Endothelial cell of umbilical vein (primary cell): ENCODE measurements at regions of chr15 and their contacts with region 1.

Region 1: GRCh38 chr15:78750566-78750965 is 60.7 kb downstream of the ADAMTS7 start:
- DNase-seq: no peak
- H3K4me3 ChIP-seq: peak overlapping the region in 1 of 3 experiments; percentile 10
- H3K27ac ChIP-seq: no peak overlapping the region
- H3K4me1 ChIP-seq: no peaks in the 10 kb centered on the region
- H3K27me3 ChIP-seq: no peaks in the 10 kb centered on the region
- CTCF ChIP-seq: no peak
- POLR2A ChIP-seq: no peak

Region 2: DNA sequence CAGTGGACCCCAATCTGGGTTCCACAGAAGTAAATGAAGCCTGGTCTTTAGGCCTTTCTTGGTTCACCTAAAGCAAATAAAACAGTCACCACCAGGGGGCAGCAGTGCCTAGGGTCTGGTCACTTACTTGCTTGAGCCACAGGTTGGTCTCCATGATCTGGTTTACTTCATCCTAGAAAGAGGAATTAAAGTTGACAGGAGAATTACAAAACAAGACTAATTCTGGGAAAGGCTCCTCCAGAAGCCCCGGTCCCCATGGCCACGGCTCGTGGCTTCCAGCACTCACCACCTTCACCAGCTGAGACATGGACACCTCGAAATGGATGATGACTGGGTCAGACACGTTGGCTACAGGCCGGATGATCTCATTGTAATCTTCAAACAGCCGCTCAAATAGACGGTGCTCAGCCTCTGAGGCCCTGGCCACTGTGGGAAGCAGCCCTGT is 132.1 kb before region 1 on chr15:
- CTCF ChIA-PET with region 1: interaction called, 23 read pairs
- POLR2A ChIA-PET with region 1: no interaction called
- dilution Hi-C with region 1: no loop called
- intact Hi-C with region 1: loop called (anchors 1 kb)
- DNase-seq: peak; percentile 73
- H3K4me3 ChIP-seq: no peak overlapping the region
- H3K27ac ChIP-seq: no peak overlapping the region
- H3K4me1 ChIP-seq: no peaks in the 10 kb centered on the region
- H3K27me3 ChIP-seq: peaks cover 30 to 49% of the 10 kb centered on the region in 2 experiments
- CTCF ChIP-seq: peak; percentile 73 to 76
- POLR2A ChIP-seq: no peak

Region 3: GRCh38 chr15:78709263-78709882 is 41.2 kb before region 1 on chr15:
- CTCF ChIA-PET with region 1: interaction called, 10 read pairs
- POLR2A ChIA-PET with region 1: no interaction called
- dilution Hi-C with region 1: no loop called
- intact Hi-C with region 1: loop called (anchors 1 kb)
- DNase-seq: peak; percentile 42
- H3K4me3 ChIP-seq: no peak overlapping the region
- H3K27ac ChIP-seq: no peak overlapping the region
- H3K4me1 ChIP-seq: no peaks in the 10 kb centered on the region
- H3K27me3 ChIP-seq: peaks cover 12 to 23% of the 10 kb centered on the region in 2 experiments
- CTCF ChIP-seq: peak; percentile 68 to 90
- POLR2A ChIP-seq: no peak

Region 4: DNA sequence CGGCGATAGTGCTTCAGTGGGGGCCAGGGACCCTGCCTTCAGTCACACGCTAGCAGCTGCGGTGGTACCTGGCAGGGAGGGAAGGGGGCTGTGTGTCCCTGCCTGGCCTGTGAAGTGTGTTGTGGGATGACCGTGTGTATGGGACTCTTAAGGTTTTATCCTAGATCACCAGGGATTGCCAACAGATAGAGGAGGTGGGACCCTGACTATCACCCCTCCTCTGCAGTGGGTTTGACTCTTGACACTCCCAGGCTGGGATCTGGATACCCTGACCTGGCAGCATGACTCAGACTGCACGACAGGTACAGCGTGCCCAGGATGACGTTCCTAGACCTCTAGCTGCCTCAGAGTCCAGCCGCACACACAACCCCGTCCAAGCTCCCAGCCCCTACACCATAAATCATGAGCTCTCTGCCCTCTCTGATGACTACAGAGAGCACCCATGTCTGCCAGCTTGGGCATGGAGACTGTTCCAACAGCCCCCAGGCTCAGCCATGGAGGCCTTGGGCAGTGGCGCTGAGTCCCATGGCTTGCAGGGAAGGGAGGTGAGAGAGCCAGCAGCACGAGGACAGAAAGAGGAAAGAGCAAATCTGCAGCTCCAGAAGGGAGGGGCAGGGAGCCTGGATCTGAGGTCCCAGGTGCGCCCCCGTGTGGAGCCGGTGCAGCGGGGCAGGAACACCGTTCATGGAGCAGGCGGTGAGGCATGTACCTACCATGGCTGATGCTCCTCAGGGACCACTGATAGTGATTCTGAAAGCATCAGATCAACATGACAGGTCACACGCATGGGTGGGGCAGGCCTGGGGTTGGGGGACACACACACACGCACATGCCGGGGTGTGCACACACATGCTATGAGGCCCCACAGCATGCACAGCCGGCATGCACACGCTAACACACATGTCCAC is 10.3 kb before region 1 on chr15:
- CTCF ChIA-PET with region 1: interaction called, 14 read pairs
- POLR2A ChIA-PET with region 1: no interaction called
- dilution Hi-C with region 1: no loop called
- intact Hi-C with region 1: no loop called
- DNase-seq: peak; percentile 26
- H3K4me3 ChIP-seq: no peak overlapping the region
- H3K27ac ChIP-seq: no peak overlapping the region
- H3K4me1 ChIP-seq: no peaks in the 10 kb centered on the region
- H3K27me3 ChIP-seq: peaks cover 0 to 2% of the 10 kb centered on the region in 2 experiments
- CTCF ChIP-seq: peak; percentile 46 to 77
- POLR2A ChIP-seq: no peak